Dorsolateral prefrontal cortex (tissue), 120 donors: ENCODE measurements at regions of chr2 and their contacts with region 1.

Region 1: DNA sequence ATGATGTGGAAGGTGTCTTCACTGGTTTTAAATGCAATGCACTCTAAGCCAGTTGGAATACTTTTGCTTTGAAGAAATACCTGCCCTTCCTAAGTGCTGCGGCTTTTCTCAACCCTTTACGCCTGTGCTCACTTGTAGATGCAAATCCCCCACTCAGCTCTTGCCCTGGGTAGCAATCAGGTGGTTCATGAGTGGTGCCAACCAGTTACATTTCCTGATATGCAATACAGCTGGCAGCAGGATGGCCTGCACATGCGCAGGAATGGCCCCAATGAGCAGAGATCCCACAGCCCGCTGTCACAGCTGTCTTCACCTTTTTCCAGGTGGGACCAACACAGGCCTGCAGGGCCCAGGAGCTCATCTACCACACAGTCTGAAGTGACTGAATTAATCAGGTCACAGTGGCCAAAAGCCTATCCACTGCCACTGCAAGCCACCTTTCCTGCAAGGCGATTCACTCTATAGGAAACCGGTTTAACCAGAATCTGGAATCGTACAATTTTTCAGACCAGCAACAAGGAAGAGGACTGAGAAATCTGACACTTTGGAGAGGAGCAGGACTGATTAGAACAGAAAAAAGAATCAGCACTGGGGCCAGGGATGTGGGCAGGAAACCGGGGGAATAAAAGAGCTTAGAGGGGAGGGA is 247.8 kb downstream of the MYT1L start:
- DNase-seq: no peak
- H3K4me3 ChIP-seq: no peak overlapping the region
- H3K27ac ChIP-seq: no peak overlapping the region
- H3K27me3 ChIP-seq: no peaks in the 10 kb centered on the region
- CTCF ChIP-seq: no peak

Region 2: DNA sequence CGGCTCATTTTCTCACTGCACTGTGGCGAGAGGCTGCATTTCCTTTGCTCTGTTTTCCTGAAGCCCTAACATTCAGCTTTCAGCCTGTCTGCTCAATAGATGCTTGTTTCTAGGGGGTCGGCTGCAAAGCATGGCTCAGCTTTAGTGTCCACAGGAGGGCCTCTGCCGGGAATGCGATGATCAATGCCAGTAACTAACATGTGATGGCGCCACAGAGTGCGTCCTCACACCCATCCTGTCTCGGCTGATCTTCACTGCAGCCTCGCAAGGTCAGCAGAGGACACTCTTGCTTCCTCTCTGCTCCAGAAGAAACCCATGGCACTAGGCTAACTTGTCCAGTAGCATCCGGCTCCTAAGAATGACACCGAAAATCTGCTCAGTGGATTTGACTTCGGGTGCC is 182.5 kb before region 1 on chr2:
- intact Hi-C with region 1: loop called in 1 of 2 experiments (anchors 10 kb)
- DNase-seq: peak in 1 of 10 donors; percentile 66
- H3K4me3 ChIP-seq: no peak overlapping the region
- H3K27ac ChIP-seq: peak overlapping the region in 26 of 59 donors; percentile 4 to 77 (median 46)
- H3K27me3 ChIP-seq: no peaks in the 10 kb centered on the region
- CTCF ChIP-seq: peak in 35 of 56 donors; percentile 12 to 49 (median 30)